PC-9 (cell line): ENCODE measurements at regions of chr4 and their contacts with region 1.

Region 1: DNA sequence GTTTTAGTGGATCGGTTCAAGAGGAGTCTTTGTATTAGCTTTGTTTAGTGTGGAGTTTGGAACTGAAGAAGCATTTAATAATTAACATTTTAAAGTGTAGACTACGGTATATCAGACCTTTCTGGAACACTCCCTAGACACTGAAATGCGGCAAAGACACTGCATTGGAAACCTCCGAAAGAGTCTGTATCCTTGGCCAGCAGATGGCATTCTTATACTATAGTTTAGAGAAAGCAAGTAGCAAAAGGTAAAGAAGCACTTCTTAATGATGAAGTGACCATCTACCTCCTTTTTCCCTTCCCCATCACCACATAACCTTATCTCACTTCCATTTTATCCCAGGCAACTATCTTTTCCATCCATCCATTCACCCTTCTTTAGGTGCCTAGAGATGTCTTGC is 7.6 kb downstream of the FABP2 start:
- DNase-seq: no peak
- H3K4me3 ChIP-seq: no peak overlapping the region
- H3K27ac ChIP-seq: no peak overlapping the region
- H3K4me1 ChIP-seq: no peaks in the 10 kb centered on the region
- H3K27me3 ChIP-seq: no peaks in the 10 kb centered on the region
- CTCF ChIP-seq: peak; percentile 43

Region 2: GRCh38 chr4:120056246-120056645 is 741.9 kb after region 1 on chr4:
- CTCF ChIA-PET with region 1: no interaction called
- POLR2A ChIA-PET with region 1: no interaction called
- intact Hi-C with region 1: loop called (anchors 5 kb)
- DNase-seq: no peak
- H3K4me3 ChIP-seq: no peak overlapping the region
- H3K27ac ChIP-seq: no peak overlapping the region
- H3K4me1 ChIP-seq: no peaks in the 10 kb centered on the region
- H3K27me3 ChIP-seq: no peaks in the 10 kb centered on the region
- CTCF ChIP-seq: peak; percentile 51; the same call in 1 of the 2 replicates